ENCODE measurements at regions of chr2 and their contacts with region 1.

Region 1: DNA sequence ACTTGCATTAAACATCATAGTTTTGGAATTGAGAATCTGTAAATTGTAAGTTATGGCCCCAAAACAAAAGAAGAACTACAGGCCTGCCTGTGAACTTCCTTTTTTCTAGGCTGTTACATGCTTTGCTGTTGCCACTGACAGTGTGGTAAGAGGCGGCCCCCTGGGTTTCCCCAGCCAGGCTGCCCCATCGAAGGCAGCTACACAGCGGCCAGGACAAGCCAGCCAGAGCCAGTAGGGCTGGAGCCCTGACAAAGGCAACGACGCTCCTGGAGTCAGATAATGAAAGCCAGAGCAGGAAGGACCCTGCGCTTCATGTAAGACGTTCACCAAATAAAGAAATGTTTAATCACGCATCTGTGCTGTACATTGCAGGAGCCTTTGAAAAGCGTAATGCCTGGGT is 55.0 kb downstream of the ANKRD44 start:
- DNase-seq: peak; percentile 79
- H3K4me3 Mint-ChIP-seq: peak overlapping the region; percentile 67
- H3K27ac Mint-ChIP-seq: peak overlapping the region; percentile 97
- H3K4me1 Mint-ChIP-seq: peaks cover 72% of the 10 kb centered on the region
- H3K27me3 Mint-ChIP-seq: no peaks in the 10 kb centered on the region

Region 2: DNA sequence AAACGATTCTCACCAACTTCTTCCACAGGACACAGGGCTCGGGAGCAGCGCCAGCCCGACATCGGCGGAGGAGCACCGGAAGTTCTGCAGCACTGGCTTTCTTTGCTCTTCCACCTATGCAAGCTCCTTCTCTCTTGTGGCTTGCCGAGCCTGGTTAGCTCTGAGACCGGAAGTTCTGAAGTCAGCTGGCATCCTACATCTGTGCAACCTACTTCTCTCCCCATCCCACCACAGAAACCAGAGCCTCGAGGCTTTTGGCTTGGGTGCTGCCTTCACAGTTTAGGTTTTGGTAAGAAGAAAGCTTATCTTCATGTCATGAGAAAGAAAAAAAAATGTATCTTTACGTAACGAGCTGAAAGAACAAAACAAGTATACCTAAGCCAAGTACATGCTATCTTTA is 56.7 kb before region 1 on chr2:
- CTCF ChIA-PET with region 1: interaction called, 4 read pairs
- POLR2A ChIA-PET with region 1: interaction called, 11 read pairs
- DNase-seq: peak; percentile 94
- H3K4me3 Mint-ChIP-seq: peak overlapping the region; percentile 79
- H3K27ac Mint-ChIP-seq: peak overlapping the region; percentile 96
- H3K4me1 Mint-ChIP-seq: peaks cover 85% of the 10 kb centered on the region
- H3K27me3 Mint-ChIP-seq: no peaks in the 10 kb centered on the region

Region 3: GRCh38 chr2:197239434-197239833 is 16.1 kb before region 1 on chr2:
- CTCF ChIA-PET with region 1: interaction called, 14 read pairs
- POLR2A ChIA-PET with region 1: interaction called, 19 read pairs
- DNase-seq: no peak
- H3K4me3 Mint-ChIP-seq: peak overlapping the region; percentile 73
- H3K27ac Mint-ChIP-seq: peak overlapping the region; percentile 89
- H3K4me1 Mint-ChIP-seq: peaks cover 85% of the 10 kb centered on the region
- H3K27me3 Mint-ChIP-seq: no peaks in the 10 kb centered on the region

Region 4: DNA sequence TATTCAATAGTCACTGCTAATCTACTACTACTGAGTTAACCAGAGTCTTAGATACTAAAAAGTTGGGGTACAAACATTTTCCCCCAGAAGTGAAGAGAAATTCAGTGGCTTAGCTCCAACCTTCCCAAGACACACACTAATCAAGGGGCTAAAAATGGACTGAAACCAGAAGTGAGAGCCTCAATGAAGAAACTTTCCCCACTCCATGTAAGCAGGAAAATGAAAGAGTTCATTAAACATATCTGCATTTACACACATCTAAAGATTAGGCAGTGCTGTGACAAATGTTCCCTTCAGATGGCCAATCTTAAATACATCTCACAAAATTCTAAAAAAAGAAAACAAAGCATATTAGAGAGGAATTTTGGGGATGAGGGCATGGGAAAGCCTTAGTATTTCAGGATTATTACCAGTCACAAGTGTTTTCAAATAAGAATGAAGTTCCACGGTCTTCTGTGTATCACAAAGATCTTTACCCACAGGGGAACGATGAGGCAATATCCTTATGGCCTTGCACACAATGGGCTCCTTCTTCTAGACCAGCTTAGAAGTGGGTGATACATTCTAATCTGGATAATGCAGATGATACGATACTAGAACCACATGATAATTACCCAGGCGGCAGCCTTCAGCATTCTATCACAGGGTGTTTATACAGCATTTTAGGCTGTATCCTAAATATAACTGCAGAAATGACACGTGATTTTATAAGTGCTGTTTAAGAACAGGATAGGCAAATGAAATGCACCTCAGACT is 37.9 kb after region 1 on chr2:
- CTCF ChIA-PET with region 1: interaction called, 4 read pairs
- POLR2A ChIA-PET with region 1: interaction called, 12 read pairs
- DNase-seq: peak; percentile 32
- H3K4me3 Mint-ChIP-seq: peak overlapping the region; percentile 73
- H3K27ac Mint-ChIP-seq: peak overlapping the region; percentile 96
- H3K4me1 Mint-ChIP-seq: peaks cover 90% of the 10 kb centered on the region
- H3K27me3 Mint-ChIP-seq: no peaks in the 10 kb centered on the region